Activated CD4-positive, alpha-beta memory T cell treated with anti-CD3 and anti-CD28 coated beads, Interleukin-2, amount 10 ng/mL, durations not matched to agents 7 days and 5 days (primary cell): ENCODE measurements at regions of chr20 and their contacts with region 1.

Region 1: DNA sequence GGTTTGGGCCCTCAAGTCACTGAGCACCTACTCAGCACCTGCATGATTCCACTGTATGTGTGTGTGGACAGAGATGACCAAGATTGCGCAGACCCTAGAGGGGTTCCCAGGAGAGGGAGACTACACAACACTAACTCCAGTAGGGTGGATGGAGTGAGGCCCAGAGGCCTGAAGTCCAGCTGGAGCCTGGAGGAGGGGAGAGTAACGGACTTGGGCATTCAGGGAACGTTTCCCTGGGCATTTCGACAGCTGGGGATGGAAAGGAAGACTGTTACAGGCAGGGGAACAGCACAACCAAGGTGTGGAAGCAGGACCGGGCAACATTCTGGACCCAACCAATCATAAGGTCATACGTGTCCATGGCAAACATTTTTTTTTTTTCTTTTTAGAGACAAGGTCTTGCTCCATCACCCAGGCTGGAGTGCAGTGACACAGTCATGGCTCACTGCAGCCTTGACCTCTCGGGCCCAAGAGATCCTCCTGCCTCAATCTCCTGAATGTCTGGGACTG is 11.1 kb upstream of the CEBPB start:
- DNase-seq: no peak
- H3K4me3 Mint-ChIP-seq: no peak overlapping the region
- H3K27ac Mint-ChIP-seq: no peak overlapping the region
- H3K4me1 Mint-ChIP-seq: no peaks in the 10 kb centered on the region
- H3K27me3 Mint-ChIP-seq: peaks cover 8% of the 10 kb centered on the region

Region 2: GRCh38 chr20:49982346-49983122 is 197.0 kb before region 1 on chr20 and contains the start of gene SNAI1:
- CTCF ChIA-PET with region 1: interaction called, 18 read pairs
- POLR2A ChIA-PET with region 1: no interaction called
- DNase-seq: peak; percentile 81
- H3K4me3 Mint-ChIP-seq: peak within 1 kb of the TSS; percentile 41
- H3K27ac Mint-ChIP-seq: no peak within 1 kb of the TSS
- H3K4me1 Mint-ChIP-seq: peaks cover 26% of the 10 kb centered on the region
- H3K27me3 Mint-ChIP-seq: peaks cover 28% of the 10 kb centered on the region
- total RNA-seq, gene SNAI1: 0.28 to 0.38 TPM

Region 3: DNA sequence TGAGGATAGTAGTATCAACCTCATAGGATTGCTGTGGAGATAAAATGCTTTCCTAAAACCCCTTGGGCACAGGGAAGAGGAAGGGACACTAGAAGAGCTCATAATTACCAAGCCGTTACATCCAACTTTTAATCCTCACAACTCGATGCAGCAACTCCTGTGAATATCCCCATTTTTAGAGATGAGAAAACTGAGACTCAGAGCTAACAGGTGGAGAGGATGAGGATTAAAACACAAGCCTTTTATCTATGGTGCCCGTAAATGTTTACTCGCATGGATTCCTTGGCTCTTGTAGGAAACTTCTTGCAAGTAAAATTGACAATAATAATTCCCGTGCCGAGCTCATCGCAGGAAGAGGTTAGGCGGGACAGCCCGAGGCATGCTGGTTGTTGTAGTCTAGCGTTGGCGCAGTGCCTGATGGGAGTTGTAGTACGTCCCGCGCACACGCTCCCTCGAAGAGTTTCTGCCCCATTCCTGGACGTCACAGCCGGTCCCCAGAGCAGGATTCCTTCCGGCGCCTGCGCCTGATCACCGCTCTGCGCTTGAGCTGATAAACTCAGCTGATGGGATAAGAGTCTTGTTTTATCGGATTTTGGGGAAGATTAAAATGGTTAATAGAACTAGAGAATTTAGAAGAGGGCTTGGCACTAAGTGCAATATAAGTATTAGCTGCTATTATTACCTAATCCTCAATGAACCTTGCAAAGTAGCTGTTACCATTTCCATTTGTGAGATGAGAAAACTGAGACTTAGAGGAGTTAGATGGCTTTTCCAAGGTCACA is 63.8 kb before region 1 on chr20:
- CTCF ChIA-PET with region 1: interaction called, 41 read pairs
- POLR2A ChIA-PET with region 1: interaction called, 3 read pairs
- DNase-seq: peak; percentile 91
- H3K4me3 Mint-ChIP-seq: peak overlapping the region; percentile 80
- H3K27ac Mint-ChIP-seq: peak overlapping the region; percentile 85
- H3K4me1 Mint-ChIP-seq: peaks cover 52% of the 10 kb centered on the region
- H3K27me3 Mint-ChIP-seq: no peaks in the 10 kb centered on the region

Region 4: GRCh38 chr20:50120897-50121693 is 58.5 kb before region 1 on chr20:
- CTCF ChIA-PET with region 1: interaction called, 41 read pairs
- POLR2A ChIA-PET with region 1: interaction called, 3 read pairs
- DNase-seq: peak; percentile 72
- H3K4me3 Mint-ChIP-seq: no peak overlapping the region
- H3K27ac Mint-ChIP-seq: no peak overlapping the region
- H3K4me1 Mint-ChIP-seq: peaks cover 8% of the 10 kb centered on the region
- H3K27me3 Mint-ChIP-seq: no peaks in the 10 kb centered on the region

Region 5: DNA sequence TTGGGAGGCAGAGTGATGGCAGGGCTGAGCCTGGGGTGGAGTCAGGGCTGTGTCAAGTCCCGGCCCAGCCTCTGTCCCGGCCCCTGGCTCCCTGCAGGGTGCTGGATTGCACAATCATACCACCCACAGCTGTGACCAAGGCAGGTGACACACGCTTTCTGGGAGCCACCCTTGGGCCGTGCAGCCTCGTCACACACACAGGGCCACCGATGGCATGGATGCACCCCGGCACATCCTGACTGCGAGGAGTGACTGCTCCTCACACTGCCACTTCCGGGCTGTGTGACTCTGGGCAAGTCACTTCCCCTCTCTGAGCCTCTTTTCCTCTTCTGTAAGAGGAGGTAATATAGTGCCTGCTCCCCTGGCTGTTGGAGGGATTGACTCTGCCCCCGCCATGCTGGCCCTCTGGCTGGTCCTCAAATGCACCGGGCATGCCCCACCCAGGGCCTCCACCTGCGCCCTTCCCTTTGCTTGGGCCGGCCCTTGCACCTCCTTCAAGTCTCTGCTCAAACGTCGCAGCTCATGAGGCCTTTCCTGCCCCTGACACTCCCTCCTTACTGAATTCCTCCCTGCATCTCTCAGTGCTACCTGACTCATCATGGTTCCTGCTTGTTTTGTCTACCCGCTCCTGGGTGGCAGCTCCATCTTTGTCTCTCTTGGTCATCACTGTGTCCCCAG is 104.5 kb after region 1 on chr20:
- CTCF ChIA-PET with region 1: no interaction called
- POLR2A ChIA-PET with region 1: no interaction called
- DNase-seq: peak; percentile 62
- H3K4me3 Mint-ChIP-seq: no peak overlapping the region
- H3K27ac Mint-ChIP-seq: peak overlapping the region; percentile 65
- H3K4me1 Mint-ChIP-seq: peaks cover 44% of the 10 kb centered on the region
- H3K27me3 Mint-ChIP-seq: no peaks in the 10 kb centered on the region

Region 6: GRCh38 chr20:50464026-50464724 is 284.6 kb after region 1 on chr20:
- CTCF ChIA-PET with region 1: interaction called, 16 read pairs
- POLR2A ChIA-PET with region 1: no interaction called
- DNase-seq: peak; percentile 63
- H3K4me3 Mint-ChIP-seq: no peak overlapping the region
- H3K27ac Mint-ChIP-seq: no peak overlapping the region
- H3K4me1 Mint-ChIP-seq: peaks cover 14% of the 10 kb centered on the region
- H3K27me3 Mint-ChIP-seq: peaks cover 8% of the 10 kb centered on the region